Endothelial cell of umbilical vein (primary cell): ENCODE measurements at regions of chr14 and their contacts with region 1.

Region 1: GRCh38 chr14:23057757-23058653 is 685 bp upstream of the CDH24 start:
- DNase-seq: peak; percentile 87
- H3K4me3 ChIP-seq: peak overlapping the region; percentile 28 to 62 (median 49)
- H3K27ac ChIP-seq: peak overlapping the region; percentile 48
- H3K4me1 ChIP-seq: peaks cover 31% of the 10 kb centered on the region
- H3K27me3 ChIP-seq: no peaks in the 10 kb centered on the region
- CTCF ChIP-seq: peak; percentile 97
- POLR2A ChIP-seq: peak; percentile 33

Region 2: DNA sequence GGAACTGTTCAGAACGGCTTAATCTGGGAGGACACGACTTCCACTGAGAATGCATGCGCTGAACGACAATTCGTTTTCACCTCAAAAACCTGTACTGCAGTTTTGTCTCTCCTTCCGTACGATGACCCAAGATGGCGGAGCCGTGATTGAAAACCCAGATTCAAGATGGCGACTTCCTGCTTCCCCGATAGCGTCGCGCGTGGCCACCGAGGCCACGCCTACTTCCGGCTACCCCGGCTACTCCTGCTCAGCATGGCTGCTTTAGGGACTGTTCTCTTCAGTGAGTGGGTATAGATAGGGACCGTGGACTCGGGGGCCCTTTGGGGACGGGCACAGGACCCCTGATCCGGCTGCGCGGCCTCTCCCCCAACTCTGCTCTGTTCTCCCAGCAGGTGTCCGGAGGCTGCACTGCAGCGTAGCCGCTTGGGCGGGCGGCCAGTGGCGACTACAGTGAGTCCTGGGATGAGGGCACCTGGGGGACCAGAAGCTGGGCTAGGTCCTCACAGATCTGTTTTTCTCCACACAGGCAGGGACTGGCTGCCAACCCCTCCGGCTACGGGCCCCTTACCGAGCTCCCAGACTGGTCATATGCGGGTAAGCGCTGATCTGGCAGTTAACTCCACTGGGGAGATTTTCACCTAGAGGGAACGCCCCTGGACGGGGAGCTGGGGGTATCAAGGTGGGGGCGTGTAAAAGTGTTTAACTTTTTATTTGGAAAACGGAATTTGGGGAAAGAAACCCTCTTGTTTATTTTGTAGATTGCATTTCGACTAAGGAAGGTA is 228.2 kb before region 1 on chr14 and contains the start of gene MRPL52:
- CTCF ChIA-PET with region 1: no interaction called
- POLR2A ChIA-PET with region 1: no interaction called
- dilution Hi-C with region 1: no loop called
- intact Hi-C with region 1: loop called (anchors 10 kb)
- DNase-seq: peak; percentile 84
- H3K4me3 ChIP-seq: peak within 1 kb of the TSS; percentile 68 to 98 (median 97)
- H3K27ac ChIP-seq: peak within 1 kb of the TSS; percentile 92
- H3K4me1 ChIP-seq: peaks cover 27% of the 10 kb centered on the region
- H3K27me3 ChIP-seq: no peaks in the 10 kb centered on the region
- CTCF ChIP-seq: peak in 1 of 2 donors; percentile 4
- POLR2A ChIP-seq: peak; percentile 87
- total RNA-seq, gene MRPL52: 174 TPM in 2 replicates

Region 3: DNA sequence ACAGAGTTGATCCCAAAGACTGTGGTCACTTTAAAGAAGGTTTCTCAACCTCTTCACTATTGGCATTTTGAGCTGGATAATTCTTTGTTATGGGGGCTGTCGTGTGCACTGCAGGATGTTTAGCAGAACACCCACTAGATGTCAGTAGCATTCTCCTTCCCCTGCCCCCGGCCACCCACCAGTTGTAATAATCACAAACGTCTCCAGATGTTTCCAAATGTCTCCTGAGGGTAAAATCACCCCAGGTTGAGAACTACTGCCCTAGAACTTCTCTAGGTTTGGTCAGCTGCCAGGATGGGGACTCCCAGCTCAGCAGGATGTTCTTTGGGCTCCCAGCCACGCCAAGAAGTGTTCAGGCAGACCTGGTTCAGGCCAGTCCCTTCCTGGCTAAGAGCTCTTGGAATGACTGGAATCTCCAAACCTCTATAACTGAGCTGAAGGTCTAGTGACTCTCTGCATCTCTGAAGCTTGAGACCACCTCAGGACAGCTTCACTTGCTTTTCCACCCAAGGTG is 63.2 kb before region 1 on chr14:
- CTCF ChIA-PET with region 1: interaction called, 1,071 read pairs
- POLR2A ChIA-PET with region 1: interaction called, 6 read pairs
- dilution Hi-C with region 1: no loop called
- intact Hi-C with region 1: loop called (anchors 1 kb)
- DNase-seq: peak; percentile 49
- H3K4me3 ChIP-seq: no peak overlapping the region
- H3K27ac ChIP-seq: no peak overlapping the region
- H3K4me1 ChIP-seq: peaks cover 4% of the 10 kb centered on the region
- H3K27me3 ChIP-seq: no peaks in the 10 kb centered on the region
- CTCF ChIP-seq: peak; percentile 54 to 64
- POLR2A ChIP-seq: no peak

Region 4: GRCh38 chr14:23034483-23035302 is 23.3 kb before region 1 on chr14 and contains the start of gene PSMB5:
- CTCF ChIA-PET with region 1: interaction called, 9 read pairs
- POLR2A ChIA-PET with region 1: interaction called, 5 read pairs
- dilution Hi-C with region 1: no loop called
- intact Hi-C with region 1: loop called (anchors 1 kb)
- DNase-seq: peak; percentile 97
- H3K4me3 ChIP-seq: peak within 1 kb of the TSS; percentile 73 to 88 (median 84)
- H3K27ac ChIP-seq: peak within 1 kb of the TSS; percentile 88
- H3K4me1 ChIP-seq: peaks cover 12% of the 10 kb centered on the region
- H3K27me3 ChIP-seq: no peaks in the 10 kb centered on the region
- CTCF ChIP-seq: no peak
- POLR2A ChIP-seq: peak; percentile 89
- total RNA-seq, gene PSMB5: 214 and 236 TPM in 2 replicates

Region 5: GRCh38 chr14:23076785-23077408 is 18.9 kb after region 1 on chr14:
- CTCF ChIA-PET with region 1: interaction called, 21 read pairs
- POLR2A ChIA-PET with region 1: interaction called, 8 read pairs
- dilution Hi-C with region 1: no loop called
- intact Hi-C with region 1: no loop called
- DNase-seq: peak; percentile 49
- H3K4me3 ChIP-seq: no peak overlapping the region
- H3K27ac ChIP-seq: no peak overlapping the region
- H3K4me1 ChIP-seq: peaks cover 27% of the 10 kb centered on the region
- H3K27me3 ChIP-seq: no peaks in the 10 kb centered on the region
- CTCF ChIP-seq: peak; percentile 46 to 53
- POLR2A ChIP-seq: no peak

Region 6: GRCh38 chr14:23128969-23129753 is 71.2 kb after region 1 on chr14:
- CTCF ChIA-PET with region 1: no interaction called
- POLR2A ChIA-PET with region 1: no interaction called
- dilution Hi-C with region 1: no loop called
- intact Hi-C with region 1: no loop called
- DNase-seq: no peak
- H3K4me3 ChIP-seq: no peak overlapping the region
- H3K27ac ChIP-seq: no peak overlapping the region
- H3K4me1 ChIP-seq: peaks cover 29% of the 10 kb centered on the region
- H3K27me3 ChIP-seq: no peaks in the 10 kb centered on the region
- CTCF ChIP-seq: no peak
- POLR2A ChIP-seq: no peak

Region 7: DNA sequence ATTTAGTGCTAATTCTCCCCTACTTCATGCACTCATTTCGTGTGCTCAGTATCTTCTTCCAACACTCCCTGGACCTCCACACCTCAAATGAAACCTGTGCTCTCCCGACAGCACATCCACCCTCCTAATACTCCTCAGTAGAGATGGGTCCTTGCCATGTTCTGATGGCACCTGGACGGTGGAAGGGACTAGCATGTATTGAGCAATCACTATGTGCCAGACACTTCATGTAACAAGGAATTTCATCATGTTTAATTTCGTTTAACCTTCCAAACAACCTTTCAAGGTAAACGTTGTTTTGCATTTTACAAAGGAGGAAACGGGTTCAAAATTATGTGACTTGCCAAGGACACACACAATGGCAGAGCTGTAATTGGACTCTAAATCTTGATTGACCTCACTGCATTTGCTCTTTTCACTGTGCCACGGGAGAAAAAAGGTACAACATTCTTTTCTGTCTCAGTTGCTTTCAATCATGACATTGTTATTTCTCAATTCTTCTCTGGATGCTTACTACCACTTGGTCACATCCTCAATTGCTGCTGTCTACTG is 137.6 kb after region 1 on chr14:
- CTCF ChIA-PET with region 1: no interaction called
- POLR2A ChIA-PET with region 1: no interaction called
- dilution Hi-C with region 1: no loop called
- intact Hi-C with region 1: no loop called
- DNase-seq: no peak
- H3K4me3 ChIP-seq: no peak overlapping the region
- H3K27ac ChIP-seq: no peak overlapping the region
- H3K4me1 ChIP-seq: no peaks in the 10 kb centered on the region
- H3K27me3 ChIP-seq: peaks cover 2 to 10% of the 10 kb centered on the region in 2 experiments
- CTCF ChIP-seq: no peak
- POLR2A ChIP-seq: no peak